HCT116 (cell line): ENCODE measurements at regions of chr9 and their contacts with region 1.

Region 1: GRCh38 chr9:88399966-88400365 is 11.7 kb downstream of the SPIN1 start:
- DNase-seq: no peak
- ATAC-seq: peak; percentile 62
- H3K4me3 ChIP-seq: no peak overlapping the region
- H3K27ac ChIP-seq: peak overlapping the region; percentile 21; the same call in 1 of the 2 replicates
- H3K4me1 ChIP-seq: peaks cover 17 to 39% of the 10 kb centered on the region in 2 experiments; a peak in 3 of 4 replicates
- H3K27me3 ChIP-seq: no peaks in the 10 kb centered on the region
- CTCF ChIP-seq: no peak
- POLR2A ChIP-seq: no peak
- RAD21 ChIP-seq: no peak

Region 2: DNA sequence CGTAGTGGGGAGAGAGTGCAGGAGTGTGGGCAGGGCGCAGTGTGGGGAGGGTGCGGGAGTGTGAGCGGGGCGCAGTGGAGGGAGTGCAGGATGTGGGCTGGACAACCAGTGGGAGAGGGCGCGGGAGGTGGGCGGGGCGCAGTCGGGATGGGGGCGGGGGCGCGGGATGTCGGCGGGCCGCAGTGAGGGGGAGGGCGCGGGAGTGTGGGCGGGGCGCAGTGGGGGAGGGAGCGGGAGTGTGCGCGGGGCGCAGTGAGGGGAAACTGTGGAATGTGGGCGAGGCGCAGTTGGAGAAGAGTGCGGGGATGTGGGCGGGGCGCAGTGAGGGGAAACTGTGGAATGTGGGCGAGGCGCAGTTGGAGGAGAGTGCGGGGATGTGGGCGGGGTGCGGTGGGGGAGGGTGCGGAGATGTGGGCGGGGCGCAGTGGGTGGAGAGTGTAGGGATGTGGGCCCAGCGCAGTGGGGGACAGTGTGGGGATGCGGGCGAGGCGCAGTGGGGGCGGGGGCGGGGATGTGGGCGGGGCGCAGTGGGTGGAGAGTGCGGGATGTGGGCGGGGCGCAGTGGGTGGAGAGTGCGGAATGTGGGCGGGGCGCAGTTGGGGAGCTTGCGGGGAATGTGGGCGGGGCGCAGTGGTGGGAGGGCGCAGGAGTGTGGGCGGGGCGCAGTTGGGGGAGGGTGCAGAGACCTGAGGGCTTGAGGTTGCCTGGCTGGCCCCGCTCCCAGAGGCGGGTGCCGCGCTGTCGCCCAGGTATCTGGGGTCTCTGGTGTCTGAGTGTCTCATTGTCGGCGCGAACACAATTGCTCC is 134.7 kb after region 1 on chr9 and contains the start of gene NXNL2:
- CTCF ChIA-PET with region 1: no interaction called
- POLR2A ChIA-PET with region 1: no interaction called
- RAD21 ChIA-PET with region 1: no interaction called
- intact Hi-C with region 1: loop called (anchors 10 kb)
- DNase-seq: peak; percentile 64
- ATAC-seq: peak; percentile 76
- H3K4me3 ChIP-seq: peak within 1 kb of the TSS; percentile 49 to 77
- H3K27ac ChIP-seq: peak within 1 kb of the TSS; percentile 72
- H3K4me1 ChIP-seq: peaks cover 23 to 41% of the 10 kb centered on the region in 2 experiments
- H3K27me3 ChIP-seq: no peaks in the 10 kb centered on the region
- CTCF ChIP-seq: no peak
- POLR2A ChIP-seq: no peak
- RAD21 ChIP-seq: no peak
- total RNA-seq, gene NXNL2: 0.86 TPM

Region 3: DNA sequence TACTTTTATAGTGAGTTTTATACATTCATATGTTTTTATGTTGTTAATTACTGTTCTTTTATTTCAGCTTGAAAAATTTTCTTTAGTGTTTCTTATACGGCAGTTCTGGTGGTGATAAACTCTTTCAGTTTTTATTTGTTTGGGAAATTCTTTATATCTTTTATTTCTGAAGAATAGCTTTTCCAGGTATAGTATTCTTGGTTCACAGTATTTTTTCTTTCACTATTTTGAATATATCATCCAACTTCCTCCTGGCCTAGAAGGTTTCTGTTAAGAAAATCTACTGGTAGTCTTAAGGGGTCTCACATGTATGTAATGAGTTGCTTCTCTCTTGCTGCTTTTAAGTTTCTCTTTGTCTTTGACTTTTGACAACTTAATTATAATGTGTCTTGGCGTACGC is 214.4 kb after region 1 on chr9:
- CTCF ChIA-PET with region 1: no interaction called
- POLR2A ChIA-PET with region 1: no interaction called
- RAD21 ChIA-PET with region 1: no interaction called
- intact Hi-C with region 1: no loop called
- DNase-seq: no peak
- ATAC-seq: no peak
- H3K4me3 ChIP-seq: no peak overlapping the region
- H3K27ac ChIP-seq: no peak overlapping the region
- H3K4me1 ChIP-seq: no peaks in the 10 kb centered on the region
- H3K27me3 ChIP-seq: no peaks in the 10 kb centered on the region
- CTCF ChIP-seq: no peak
- POLR2A ChIP-seq: no peak
- RAD21 ChIP-seq: no peak